HepG2 (cell line): ENCODE measurements at regions of chr2 and their contacts with region 1.

Region 1: GRCh38 chr2:70301344-70302194 is at the start of gene FAM136A:
- DNase-seq: peak; percentile 87
- ATAC-seq: peak; percentile 94
- H3K4me3 ChIP-seq: peak within 1 kb of the TSS; percentile 62 to 92 (median 90)
- H3K27ac ChIP-seq: peak within 1 kb of the TSS; percentile 85
- H3K4me1 ChIP-seq: peaks cover 21% of the 10 kb centered on the region
- H3K27me3 ChIP-seq: peaks cover 0 to 7% of the 10 kb centered on the region in 2 experiments; a peak in 2 of 5 replicates
- CTCF ChIP-seq: peak; percentile 91
- EP300 ChIP-seq: 0 out of 4 replicates have a peak, but pooled peaks have one; percentile 17 to 29
- POLR2A ChIP-seq: peak; percentile 92 to 96
- RAD21 ChIP-seq: peak; percentile 70
- total RNA-seq, gene FAM136A: 126 and 153 TPM in 2 replicates

Region 2: GRCh38 chr2:70009762-70010575 is 291.6 kb before region 1 on chr2:
- CTCF ChIA-PET with region 1: no interaction called
- POLR2A ChIA-PET with region 1: no interaction called
- in situ Hi-C with region 1: no loop called
- intact Hi-C with region 1: no loop called
- DNase-seq: peak; percentile 70
- ATAC-seq: peak; percentile 85
- H3K4me3 ChIP-seq: peak overlapping the region in 1 of 3 experiments; percentile 15; a peak in 2 of 6 replicates
- H3K27ac ChIP-seq: no peak overlapping the region
- H3K4me1 ChIP-seq: peaks cover 28% of the 10 kb centered on the region
- H3K27me3 ChIP-seq: no peaks in the 10 kb centered on the region
- CTCF ChIP-seq: no peak
- EP300 ChIP-seq: no peak
- POLR2A ChIP-seq: no peak
- RAD21 ChIP-seq: no peak

Region 3: GRCh38 chr2:70270323-70270722 is 31.2 kb before region 1 on chr2:
- CTCF ChIA-PET with region 1: interaction called, 4 read pairs
- POLR2A ChIA-PET with region 1: interaction called, 10 read pairs
- in situ Hi-C with region 1: no loop called
- intact Hi-C with region 1: no loop called
- DNase-seq: no peak
- ATAC-seq: no peak
- H3K4me3 ChIP-seq: peak overlapping the region in 1 of 3 experiments; percentile 32; a peak in 1 of 6 replicates
- H3K27ac ChIP-seq: peak overlapping the region; percentile 78
- H3K4me1 ChIP-seq: peaks cover 28% of the 10 kb centered on the region
- H3K27me3 ChIP-seq: no peaks in the 10 kb centered on the region
- CTCF ChIP-seq: no peak
- EP300 ChIP-seq: no peak
- POLR2A ChIP-seq: no peak
- RAD21 ChIP-seq: no peak

Region 4: DNA sequence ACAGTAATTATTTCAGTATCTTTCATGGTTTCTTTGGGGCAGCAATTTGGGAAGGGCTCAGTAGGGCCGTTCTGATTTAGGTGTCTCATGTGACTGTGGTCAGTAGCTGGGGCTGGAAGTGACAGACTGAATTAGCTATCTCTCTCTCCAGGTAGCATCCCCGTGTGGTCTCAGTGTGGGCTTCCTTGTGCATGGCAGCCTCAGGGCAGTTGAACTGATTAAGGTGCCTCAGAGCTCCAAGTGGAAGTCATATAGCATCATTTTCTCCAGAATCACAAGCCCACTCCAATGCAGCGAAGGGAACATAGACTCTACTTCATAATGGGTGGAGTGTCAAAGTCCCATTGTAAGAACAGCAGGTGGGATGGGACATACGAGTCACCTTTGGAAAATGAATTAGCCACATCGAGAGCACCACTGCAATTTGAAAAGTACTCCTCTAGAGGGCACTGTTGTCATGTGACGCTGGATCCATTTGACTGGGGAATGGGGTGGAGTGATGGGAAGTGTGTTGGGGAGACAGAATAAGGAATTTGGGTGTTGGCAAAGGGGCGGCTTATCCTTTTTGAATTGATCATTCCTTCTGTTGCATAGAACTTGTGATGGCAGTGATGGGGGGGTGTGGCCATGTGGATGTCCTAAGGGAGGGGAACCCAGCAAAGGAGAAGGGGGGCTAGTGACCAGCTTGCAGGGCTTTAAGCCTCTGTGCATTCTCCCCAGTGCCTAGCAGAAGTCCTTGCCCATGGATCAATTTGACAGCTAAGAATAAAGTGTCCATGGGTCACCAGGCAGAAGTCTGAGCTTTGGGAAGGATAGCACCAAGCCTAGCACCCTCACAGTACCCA is 39.6 kb after region 1 on chr2:
- CTCF ChIA-PET with region 1: interaction called, 4 read pairs
- POLR2A ChIA-PET with region 1: no interaction called
- in situ Hi-C with region 1: no loop called
- intact Hi-C with region 1: loop called (anchors 2 kb)
- DNase-seq: peak; percentile 62
- ATAC-seq: peak; percentile 88
- H3K4me3 ChIP-seq: no peak overlapping the region
- H3K27ac ChIP-seq: no peak overlapping the region
- H3K4me1 ChIP-seq: no peaks in the 10 kb centered on the region
- H3K27me3 ChIP-seq: peaks cover 0 to 25% of the 10 kb centered on the region in 2 experiments; a peak in 1 of 5 replicates
- CTCF ChIP-seq: peak; percentile 98
- EP300 ChIP-seq: no peak
- POLR2A ChIP-seq: no peak
- RAD21 ChIP-seq: peak; percentile 92

Region 5: GRCh38 chr2:70553584-70554337 is 252.2 kb after region 1 on chr2 and contains the start of gene TGFA:
- CTCF ChIA-PET with region 1: no interaction called
- POLR2A ChIA-PET with region 1: interaction called, 5 read pairs
- in situ Hi-C with region 1: no loop called
- intact Hi-C with region 1: loop called (anchors 1 kb)
- DNase-seq: peak; percentile 91
- ATAC-seq: peak; percentile 84
- H3K4me3 ChIP-seq: peak within 1 kb of the TSS; percentile 70 to 91 (median 75)
- H3K27ac ChIP-seq: peak within 1 kb of the TSS; percentile 76
- H3K4me1 ChIP-seq: peaks cover 58% of the 10 kb centered on the region
- H3K27me3 ChIP-seq: no peaks in the 10 kb centered on the region; a peak in 1 of 5 replicates
- CTCF ChIP-seq: peak; percentile 90
- EP300 ChIP-seq: no peak
- POLR2A ChIP-seq: peak; percentile 74 to 75
- RAD21 ChIP-seq: peak; percentile 96
- total RNA-seq, gene TGFA: 12.5 and 15.3 TPM in 2 replicates

Region 6: GRCh38 chr2:70616168-70616694 is 314.7 kb after region 1 on chr2:
- CTCF ChIA-PET with region 1: interaction called, 10 read pairs
- POLR2A ChIA-PET with region 1: interaction called, 5 read pairs
- in situ Hi-C with region 1: no loop called
- intact Hi-C with region 1: loop called (anchors 1 kb)
- DNase-seq: no peak
- ATAC-seq: no peak; the same call in 2 of the 3 replicates
- H3K4me3 ChIP-seq: no peak overlapping the region
- H3K27ac ChIP-seq: no peak overlapping the region
- H3K4me1 ChIP-seq: no peaks in the 10 kb centered on the region
- H3K27me3 ChIP-seq: peaks cover 0 to 37% of the 10 kb centered on the region in 2 experiments; a peak in 3 of 5 replicates
- CTCF ChIP-seq: no peak
- EP300 ChIP-seq: no peak
- POLR2A ChIP-seq: no peak
- RAD21 ChIP-seq: no peak

Region 7: GRCh38 chr2:70647873-70648481 is 346.4 kb after region 1 on chr2:
- CTCF ChIA-PET with region 1: interaction called, 46 read pairs
- POLR2A ChIA-PET with region 1: interaction called, 3 read pairs
- in situ Hi-C with region 1: loop called (anchors 10 kb)
- intact Hi-C with region 1: loop called (anchors 1 kb)
- DNase-seq: peak; percentile 43
- ATAC-seq: peak; percentile 80
- H3K4me3 ChIP-seq: no peak overlapping the region
- H3K27ac ChIP-seq: no peak overlapping the region
- H3K4me1 ChIP-seq: no peaks in the 10 kb centered on the region
- H3K27me3 ChIP-seq: no peaks in the 10 kb centered on the region; a peak in 1 of 5 replicates
- CTCF ChIP-seq: peak; percentile 97
- EP300 ChIP-seq: no peak
- POLR2A ChIP-seq: no peak
- RAD21 ChIP-seq: peak; percentile 89

Region 8: GRCh38 chr2:70861777-70862625 is 560.4 kb after region 1 on chr2:
- CTCF ChIA-PET with region 1: no interaction called
- POLR2A ChIA-PET with region 1: no interaction called
- in situ Hi-C with region 1: no loop called
- intact Hi-C with region 1: loop called (anchors 10 kb)
- DNase-seq: peak; percentile 76
- ATAC-seq: peak; percentile 89
- H3K4me3 ChIP-seq: no peak overlapping the region
- H3K27ac ChIP-seq: no peak overlapping the region
- H3K4me1 ChIP-seq: peaks cover 25% of the 10 kb centered on the region
- H3K27me3 ChIP-seq: peaks cover 0 to 18% of the 10 kb centered on the region in 2 experiments; a peak in 3 of 5 replicates
- CTCF ChIP-seq: peak; percentile 97
- EP300 ChIP-seq: no peak
- POLR2A ChIP-seq: no peak
- RAD21 ChIP-seq: peak; percentile 87